ENCODE measurements at regions of chr2 and their contacts with region 1.

Region 1: DNA sequence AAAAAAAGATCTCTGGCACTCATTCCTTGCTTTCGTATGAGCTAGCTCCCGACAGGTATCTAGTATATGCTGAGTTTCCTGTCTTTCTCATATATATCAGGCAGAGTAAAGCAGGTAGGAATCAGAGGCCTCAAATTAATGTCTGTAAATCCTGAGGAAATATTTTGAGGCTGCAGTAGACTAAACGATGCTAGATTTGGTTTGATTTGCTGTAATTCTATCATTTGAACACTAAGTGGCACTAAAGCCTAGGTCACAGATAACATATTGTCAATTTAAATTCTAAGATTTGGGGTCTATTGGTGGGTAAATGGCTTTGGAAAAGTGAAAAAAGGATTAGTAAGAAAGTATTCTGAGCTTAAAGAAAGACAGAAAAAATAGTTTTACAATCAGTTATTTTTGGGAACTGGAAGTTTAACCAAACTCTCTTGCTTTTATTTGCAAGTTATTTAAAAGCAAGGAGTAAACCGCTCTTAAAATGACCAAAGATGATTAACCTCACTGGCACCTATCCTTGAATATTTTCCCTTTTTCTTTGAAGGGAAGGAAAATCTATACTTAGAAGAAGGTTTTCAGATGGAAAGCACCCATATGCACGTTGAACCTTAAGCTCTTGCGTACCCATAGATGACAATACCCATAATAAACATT is 37.6 kb upstream of the SLC4A10 start:
- H3K4me3 Mint-ChIP-seq: no peak overlapping the region
- H3K27ac Mint-ChIP-seq: no peak overlapping the region
- H3K4me1 Mint-ChIP-seq: no peaks in the 10 kb centered on the region
- H3K27me3 Mint-ChIP-seq: no peaks in the 10 kb centered on the region

Region 2: GRCh38 chr2:161631855-161632391 is 45.3 kb after region 1 on chr2:
- intact Hi-C with region 1: no loop called
- H3K4me3 Mint-ChIP-seq: no peak overlapping the region
- H3K27ac Mint-ChIP-seq: no peak overlapping the region
- H3K4me1 Mint-ChIP-seq: no peaks in the 10 kb centered on the region
- H3K27me3 Mint-ChIP-seq: no peaks in the 10 kb centered on the region

Region 3: GRCh38 chr2:161946489-161947107 is 360.0 kb after region 1 on chr2:
- intact Hi-C with region 1: loop called (anchors 2 kb)
- H3K4me3 Mint-ChIP-seq: no peak overlapping the region
- H3K27ac Mint-ChIP-seq: no peak overlapping the region
- H3K4me1 Mint-ChIP-seq: no peaks in the 10 kb centered on the region
- H3K27me3 Mint-ChIP-seq: peaks cover 2% of the 10 kb centered on the region

Region 4: GRCh38 chr2:162007447-162008040 is 420.9 kb after region 1 on chr2:
- intact Hi-C with region 1: loop called (anchors 10 kb)
- H3K4me3 Mint-ChIP-seq: no peak overlapping the region
- H3K27ac Mint-ChIP-seq: no peak overlapping the region
- H3K4me1 Mint-ChIP-seq: peaks cover 23% of the 10 kb centered on the region
- H3K27me3 Mint-ChIP-seq: no peaks in the 10 kb centered on the region

Region 5: DNA sequence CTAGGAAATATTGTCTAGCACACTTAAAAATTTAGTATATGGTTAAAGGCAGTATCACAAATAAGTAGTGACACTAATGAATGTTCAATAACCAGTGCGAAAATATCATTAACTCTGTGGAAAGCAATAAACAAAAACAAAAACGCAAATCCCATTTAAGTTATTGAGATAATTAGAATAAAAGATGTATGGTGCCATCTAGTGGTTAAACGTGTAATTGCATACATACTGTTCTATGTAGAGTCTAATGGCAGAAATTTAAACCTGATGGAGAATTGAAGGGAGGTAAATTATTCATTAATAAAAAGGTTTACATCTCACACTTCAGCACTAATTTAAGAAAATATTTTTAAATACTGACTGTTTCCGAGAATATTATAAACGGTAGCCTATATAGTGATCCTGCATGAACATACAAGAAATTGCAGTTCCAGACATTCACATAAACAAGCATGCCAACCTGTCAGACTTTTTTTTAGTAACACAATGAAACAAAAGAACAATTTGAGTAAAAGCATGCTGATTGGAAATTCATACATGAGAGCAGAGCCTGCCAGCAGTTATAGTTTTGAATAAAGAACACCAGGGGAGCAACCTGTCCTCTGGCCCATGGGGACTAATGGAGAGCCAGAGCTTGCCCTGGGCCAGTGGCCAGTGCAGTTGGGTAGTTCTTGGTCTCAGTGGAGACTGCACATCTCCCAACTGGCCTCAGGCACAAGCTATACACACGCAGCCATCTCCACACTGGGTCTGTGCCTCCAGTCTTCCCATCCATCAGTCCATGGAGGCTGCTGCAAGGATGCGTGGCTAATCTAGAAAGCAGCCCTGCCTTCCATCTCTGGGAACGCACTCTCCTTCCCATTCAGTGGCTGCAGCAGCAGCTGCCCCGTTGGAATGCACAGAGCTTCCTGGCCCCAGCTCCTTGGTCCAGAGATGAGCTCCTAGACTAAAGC is 537.4 kb after region 1 on chr2:
- intact Hi-C with region 1: loop called (anchors 2 kb)
- H3K4me3 Mint-ChIP-seq: no peak overlapping the region
- H3K27ac Mint-ChIP-seq: peak overlapping the region; percentile 57
- H3K4me1 Mint-ChIP-seq: peaks cover 23% of the 10 kb centered on the region
- H3K27me3 Mint-ChIP-seq: no peaks in the 10 kb centered on the region

Region 6: GRCh38 chr2:162196638-162197037 is 610.0 kb after region 1 on chr2:
- intact Hi-C with region 1: no loop called
- H3K4me3 Mint-ChIP-seq: no peak overlapping the region
- H3K27ac Mint-ChIP-seq: no peak overlapping the region
- H3K4me1 Mint-ChIP-seq: no peaks in the 10 kb centered on the region
- H3K27me3 Mint-ChIP-seq: peaks cover 5% of the 10 kb centered on the region

Region 7: DNA sequence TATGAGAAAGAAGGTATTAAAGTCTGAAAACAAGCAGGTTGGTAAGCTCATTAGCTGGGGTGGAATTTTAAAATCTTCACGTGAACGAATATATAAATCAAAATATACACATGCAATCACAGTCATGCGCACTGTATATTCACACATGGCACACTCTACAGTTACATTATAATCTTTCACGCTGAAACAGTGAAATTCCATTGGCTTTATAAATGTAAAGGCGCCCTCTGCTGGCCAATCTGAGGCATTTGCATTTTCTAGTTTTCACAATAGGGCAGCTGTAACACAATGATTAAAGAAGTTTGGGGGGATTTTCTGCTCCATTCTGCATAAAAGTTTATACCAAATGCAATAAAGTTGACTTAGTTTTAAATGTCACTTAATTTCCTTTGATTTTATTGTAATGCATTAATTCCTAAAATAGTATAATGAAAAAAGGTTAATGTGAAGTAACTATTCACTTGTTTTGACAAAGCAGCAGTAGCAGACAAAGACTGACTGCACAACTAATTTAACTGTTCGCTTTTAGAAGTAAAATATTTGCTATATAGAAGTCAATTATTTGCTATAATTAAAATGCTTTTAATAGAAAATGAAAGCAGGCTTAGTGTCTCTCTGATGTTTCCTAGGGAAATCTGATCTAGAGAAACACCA is 714.6 kb after region 1 on chr2:
- intact Hi-C with region 1: loop called (anchors 2 kb)
- H3K4me3 Mint-ChIP-seq: no peak overlapping the region
- H3K27ac Mint-ChIP-seq: no peak overlapping the region
- H3K4me1 Mint-ChIP-seq: no peaks in the 10 kb centered on the region
- H3K27me3 Mint-ChIP-seq: no peaks in the 10 kb centered on the region

Measured in dendritic cell treated with granulocyte-macrophage colony-stimulating factor and Interleukin-4, amounts not matched to agents 40 ng/mL and 50 ng/mL, for 4 days (primary cell).